ENCODE measurements at regions of chr12 and their contacts with region 1.

Region 1: DNA sequence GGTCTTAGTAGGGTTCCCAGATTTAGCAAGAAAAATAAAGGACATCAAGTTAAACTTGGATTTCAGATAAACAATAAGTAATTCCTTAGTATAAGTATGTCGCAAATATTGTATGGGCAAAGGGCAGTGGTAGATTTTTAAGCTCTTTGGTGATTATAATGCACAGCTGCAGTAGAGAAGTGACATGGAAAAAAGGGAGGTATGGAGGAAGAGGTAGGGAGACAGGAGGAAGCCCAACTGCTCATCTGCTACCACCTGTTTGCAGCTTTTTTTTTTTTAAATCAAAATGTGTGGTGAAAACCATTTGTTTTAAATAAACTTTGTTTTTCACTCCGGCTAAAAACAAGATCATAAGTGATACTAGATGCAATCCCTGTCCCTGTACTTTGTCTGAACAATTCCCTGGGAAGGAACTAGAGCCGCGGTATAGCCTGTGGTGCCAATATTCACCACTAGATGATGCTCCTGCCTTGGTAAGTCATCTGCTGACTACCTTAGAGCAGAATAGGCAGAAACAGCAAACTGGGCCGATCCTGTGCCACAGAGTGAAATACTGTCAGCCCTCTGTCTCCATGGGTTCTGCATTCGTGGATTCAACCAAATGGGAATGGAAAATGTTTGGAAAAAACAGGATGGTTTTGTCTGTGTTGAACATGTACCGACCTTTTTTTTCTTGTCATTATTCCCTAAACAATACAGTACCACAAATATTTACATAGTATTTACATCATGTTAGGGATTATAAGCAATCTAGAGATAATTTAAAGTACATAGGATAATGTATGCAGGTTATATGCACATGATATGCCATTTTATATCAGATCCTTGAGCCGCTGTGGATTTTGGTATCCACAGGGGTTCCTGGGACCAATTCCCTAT is 62.4 kb upstream of the PLBD1 start:
- DNase-seq: peak in 4 of 5 donors; percentile 55 to 67 (median 61)
- ATAC-seq: peak; percentile 87 to 99 (median 98)
- H3K4me3 ChIP-seq: no peak overlapping the region
- H3K27ac ChIP-seq: no peak overlapping the region
- H3K4me1 ChIP-seq: peaks cover 0 to 3% (median 0%) of the 10 kb centered on the region in 12 donors
- H3K27me3 ChIP-seq: no peaks in the 10 kb centered on the region
- CTCF ChIP-seq: peak; percentile 90 to 97 (median 94)
- POLR2A ChIP-seq: no peak

Region 2: DNA sequence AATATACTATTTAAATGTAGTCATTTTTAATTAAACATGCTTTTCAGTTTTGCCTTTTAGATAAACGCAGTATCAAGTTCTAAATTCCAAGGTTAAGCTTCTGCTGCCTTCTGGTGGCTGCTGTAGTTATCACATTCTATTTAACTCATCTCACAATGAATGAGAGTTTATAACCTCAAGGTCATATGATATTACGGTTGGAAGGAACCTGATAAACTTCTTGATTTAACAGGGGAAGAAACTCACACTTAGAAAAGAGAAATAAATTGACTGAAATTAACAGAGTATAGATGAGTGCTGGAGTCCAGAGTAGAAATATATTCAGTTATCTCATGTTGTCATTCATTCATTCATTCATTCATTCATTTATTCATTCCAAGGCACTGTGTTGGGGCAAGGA is 34.4 kb after region 1 on chr12:
- intact Hi-C with region 1: loop called in 4 of 10 experiments (anchors 1 to 5 kb)
- DNase-seq: no peak
- ATAC-seq: peak in 2 of 4 donors; percentile 58 to 64
- H3K4me3 ChIP-seq: no peak overlapping the region
- H3K27ac ChIP-seq: no peak overlapping the region
- H3K4me1 ChIP-seq: peaks cover 0 to 3% (median 0%) of the 10 kb centered on the region in 12 donors
- H3K27me3 ChIP-seq: no peaks in the 10 kb centered on the region
- CTCF ChIP-seq: peak; percentile 50 to 81 (median 69)
- POLR2A ChIP-seq: no peak

Region 3: GRCh38 chr12:14701809-14702568 is 71.9 kb after region 1 on chr12:
- intact Hi-C with region 1: no loop called
- DNase-seq: no peak
- ATAC-seq: peak in 1 of 4 donors; percentile 41
- H3K4me3 ChIP-seq: no peak overlapping the region
- H3K27ac ChIP-seq: no peak overlapping the region
- H3K4me1 ChIP-seq: no peaks in the 10 kb centered on the region
- H3K27me3 ChIP-seq: no peaks in the 10 kb centered on the region
- CTCF ChIP-seq: no peak
- POLR2A ChIP-seq: no peak

Region 4: DNA sequence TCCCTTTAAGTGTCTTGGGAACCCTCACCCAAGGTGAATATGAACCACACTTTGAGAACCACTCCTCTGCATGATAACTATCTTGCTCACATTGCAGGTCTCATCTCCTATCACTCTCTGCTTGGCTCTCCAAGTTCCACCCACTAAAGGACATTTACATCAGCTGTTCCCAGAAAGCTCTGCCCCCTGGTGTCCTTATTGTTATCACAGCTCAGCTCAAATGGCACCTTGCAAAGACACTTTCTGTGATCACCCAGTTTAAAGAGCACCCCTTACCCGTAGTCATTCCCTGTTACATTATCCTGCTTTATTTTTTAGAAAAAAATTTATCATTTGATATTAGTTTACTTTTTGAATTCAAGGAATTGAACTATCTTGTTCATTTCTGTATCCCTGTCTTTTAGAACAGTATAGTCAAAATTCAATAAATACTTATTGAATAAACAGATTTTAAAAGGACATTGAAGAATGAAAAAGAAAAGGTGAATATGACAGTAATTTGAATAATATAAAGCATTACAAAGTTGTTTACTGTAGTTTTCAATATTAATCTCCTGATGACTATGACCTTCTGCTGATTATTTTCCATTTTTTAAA is 86.9 kb after region 1 on chr12:
- intact Hi-C with region 1: loop called in 8 of 10 experiments (anchors 2 to 10 kb)
- DNase-seq: no peak
- ATAC-seq: peak in 3 of 4 donors; percentile 37 to 73 (median 38)
- H3K4me3 ChIP-seq: no peak overlapping the region
- H3K27ac ChIP-seq: no peak overlapping the region
- H3K4me1 ChIP-seq: no peaks in the 10 kb centered on the region
- H3K27me3 ChIP-seq: no peaks in the 10 kb centered on the region
- CTCF ChIP-seq: peak; percentile 28 to 66 (median 50)
- POLR2A ChIP-seq: no peak